Heart right ventricle (tissue), 16 donors: ENCODE measurements at regions of chr1 and their contacts with region 1.

Region 1: GRCh38 chr1:151399890-151400495 is 620 bp downstream of the PSMB4 start:
- DNase-seq: no peak
- ATAC-seq: peak; percentile 10 to 56 (median 34)
- H3K4me3 ChIP-seq: peak overlapping the region; percentile 72 to 99 (median 86)
- H3K27ac ChIP-seq: peak overlapping the region; percentile 73 to 94 (median 91)
- H3K4me1 ChIP-seq: peaks cover 7 to 23% (median 15%) of the 10 kb centered on the region in 9 donors
- H3K27me3 ChIP-seq: no peaks in the 10 kb centered on the region
- CTCF ChIP-seq: no peak

Region 2: DNA sequence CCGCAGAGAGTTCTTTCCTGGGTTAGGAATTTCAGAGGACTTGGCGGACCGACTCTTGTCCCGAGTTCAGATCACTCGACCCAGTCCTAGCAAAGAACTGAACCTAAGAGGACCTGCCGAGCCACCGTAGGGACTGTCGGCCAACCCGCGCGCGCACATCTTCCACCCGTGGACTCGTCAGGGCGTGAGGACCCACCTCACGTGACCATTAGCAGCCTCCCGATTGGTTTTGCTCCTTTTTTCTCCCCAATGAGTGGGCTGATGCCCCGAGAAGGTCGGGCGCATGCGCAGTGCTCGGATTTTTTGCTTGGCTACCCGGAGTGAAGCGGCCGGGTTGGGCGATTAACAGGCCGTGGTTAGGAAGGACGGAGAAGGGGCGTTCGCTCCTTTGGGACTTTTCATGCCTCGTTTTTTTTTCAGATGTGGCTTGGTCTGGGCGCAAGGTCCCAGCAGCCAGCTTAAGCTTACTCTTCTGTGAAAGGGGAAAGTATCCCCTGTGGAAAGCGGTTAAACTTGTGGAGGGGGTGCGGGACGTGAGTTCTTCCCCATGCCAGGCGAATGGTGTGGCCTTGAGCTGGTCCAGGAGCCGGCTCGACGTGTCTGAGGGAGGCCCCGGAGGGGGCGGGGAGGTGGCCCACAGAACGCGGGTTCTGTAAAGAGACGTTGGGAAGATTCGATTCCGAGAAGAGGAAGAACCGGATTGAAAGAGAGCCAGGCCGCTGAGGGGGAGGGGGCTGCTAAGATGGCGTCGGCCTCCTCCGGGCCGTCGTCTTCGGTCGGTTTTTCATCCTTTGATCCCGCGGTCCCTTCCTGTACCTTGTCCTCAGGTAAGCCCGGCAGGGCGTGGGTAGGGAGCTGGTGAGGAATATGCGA is 201.5 kb before region 1 on chr1 and contains the start of gene PIP5K1A:
- intact Hi-C with region 1: loop called in 1 of 10 experiments (anchors 10 kb)
- DNase-seq: peak; percentile 99 to 100
- ATAC-seq: peak; percentile 95 to 97 (median 96)
- H3K4me3 ChIP-seq: peak within 1 kb of the TSS; percentile 77 to 92 (median 82)
- H3K27ac ChIP-seq: peak within 1 kb of the TSS; percentile 38 to 96 (median 92)
- H3K4me1 ChIP-seq: peaks cover 10 to 56% (median 41%) of the 10 kb centered on the region in 9 donors
- H3K27me3 ChIP-seq: no peaks in the 10 kb centered on the region
- CTCF ChIP-seq: no peak
- total RNA-seq, gene PIP5K1A: 32.4 to 48.0 (median 39.2) TPM

Region 3: DNA sequence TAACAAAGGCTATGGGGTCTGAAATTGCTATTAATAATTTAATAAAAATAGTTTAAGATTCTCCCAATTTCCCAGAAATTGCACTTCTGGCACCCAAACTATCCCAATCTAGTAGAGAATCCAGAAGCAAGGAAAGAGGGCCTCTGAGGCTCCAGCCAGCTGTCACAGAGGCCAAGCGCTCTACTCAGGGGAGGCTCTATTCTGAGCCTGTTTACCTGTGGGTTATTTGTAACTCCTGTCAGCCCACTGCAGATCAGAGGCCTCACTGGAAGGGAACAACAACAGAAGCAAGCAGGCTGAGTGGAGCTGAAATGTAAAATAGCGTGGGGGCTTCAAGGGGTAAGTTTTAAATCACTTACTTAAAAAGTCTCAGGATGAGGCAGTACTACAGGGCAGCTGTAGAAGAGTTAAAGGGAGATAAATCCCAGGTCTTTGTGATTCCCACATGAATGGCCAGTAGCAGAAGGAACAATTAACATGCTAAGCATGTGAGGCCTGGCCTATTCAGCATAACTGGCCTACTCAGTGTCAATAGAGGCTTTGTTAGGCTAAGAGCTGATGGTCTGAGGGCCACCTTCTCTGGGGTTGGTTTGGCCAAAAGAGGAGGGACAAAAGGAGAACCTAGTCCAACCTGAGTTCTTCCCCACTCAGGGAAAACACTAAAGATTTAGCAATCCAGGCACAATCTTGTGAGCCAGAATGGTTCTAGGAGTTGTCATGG is 105.1 kb before region 1 on chr1:
- intact Hi-C with region 1: loop called in 9 of 10 experiments (anchors 2 to 10 kb)
- DNase-seq: no peak
- ATAC-seq: no peak
- H3K4me3 ChIP-seq: no peak overlapping the region
- H3K27ac ChIP-seq: no peak overlapping the region
- H3K4me1 ChIP-seq: peaks cover 0 to 1% (median 0%) of the 10 kb centered on the region in 9 donors
- H3K27me3 ChIP-seq: no peaks in the 10 kb centered on the region
- CTCF ChIP-seq: no peak

Region 4: GRCh38 chr1:151340870-151341754 is 58.9 kb before region 1 on chr1:
- intact Hi-C with region 1: loop called in 6 of 10 experiments (anchors 2 to 10 kb)
- DNase-seq: peak in 1 of 2 donors; percentile 64
- ATAC-seq: peak; percentile 79 to 93 (median 88)
- H3K4me3 ChIP-seq: no peak overlapping the region
- H3K27ac ChIP-seq: peak overlapping the region in 2 of 10 donors; percentile 9 to 29
- H3K4me1 ChIP-seq: peaks cover 0 to 26% (median 7%) of the 10 kb centered on the region in 9 donors
- H3K27me3 ChIP-seq: no peaks in the 10 kb centered on the region
- CTCF ChIP-seq: peak; percentile 47 to 80 (median 75)

Region 5: GRCh38 chr1:151364996-151365395 is 35.0 kb before region 1 on chr1:
- intact Hi-C with region 1: loop called in 1 of 10 experiments (anchors 5 kb)
- DNase-seq: no peak
- ATAC-seq: no peak
- H3K4me3 ChIP-seq: no peak overlapping the region
- H3K27ac ChIP-seq: no peak overlapping the region
- H3K4me1 ChIP-seq: peaks cover 9 to 31% (median 25%) of the 10 kb centered on the region in 9 donors
- H3K27me3 ChIP-seq: no peaks in the 10 kb centered on the region
- CTCF ChIP-seq: no peak